GM10248 (cell line): ENCODE measurements at regions of chr5 and their contacts with region 1.

Region 1: GRCh38 chr5:671459-672328 is 21.5 kb downstream of the TPPP start:
- DNase-seq: peak; percentile 83
- CTCF ChIP-seq: peak; percentile 93

Region 2: DNA sequence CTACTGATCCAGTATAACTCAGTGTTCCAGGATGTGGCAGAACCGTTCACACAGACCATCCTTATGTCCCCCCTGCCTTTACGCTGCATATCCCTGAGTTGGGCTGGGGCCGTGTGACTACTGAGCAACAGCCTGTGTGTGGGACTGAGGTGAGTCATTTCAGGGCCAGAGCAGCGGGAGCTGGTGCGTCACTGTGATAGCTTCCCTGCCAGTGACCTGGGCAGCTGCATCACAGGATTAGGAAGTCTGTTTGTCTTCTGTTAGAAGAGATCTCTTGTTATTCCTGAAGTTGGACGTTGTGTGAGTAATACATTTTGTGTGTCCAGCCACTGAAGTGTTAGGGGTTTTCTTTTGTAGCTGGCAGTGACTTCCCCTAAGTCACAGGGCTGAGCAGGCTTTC is 14.1 kb before region 1 on chr5:
- CTCF ChIA-PET with region 1: interaction called, 15 read pairs
- POLR2A ChIA-PET with region 1: no interaction called
- DNase-seq: no peak
- CTCF ChIP-seq: no peak

Region 3: DNA sequence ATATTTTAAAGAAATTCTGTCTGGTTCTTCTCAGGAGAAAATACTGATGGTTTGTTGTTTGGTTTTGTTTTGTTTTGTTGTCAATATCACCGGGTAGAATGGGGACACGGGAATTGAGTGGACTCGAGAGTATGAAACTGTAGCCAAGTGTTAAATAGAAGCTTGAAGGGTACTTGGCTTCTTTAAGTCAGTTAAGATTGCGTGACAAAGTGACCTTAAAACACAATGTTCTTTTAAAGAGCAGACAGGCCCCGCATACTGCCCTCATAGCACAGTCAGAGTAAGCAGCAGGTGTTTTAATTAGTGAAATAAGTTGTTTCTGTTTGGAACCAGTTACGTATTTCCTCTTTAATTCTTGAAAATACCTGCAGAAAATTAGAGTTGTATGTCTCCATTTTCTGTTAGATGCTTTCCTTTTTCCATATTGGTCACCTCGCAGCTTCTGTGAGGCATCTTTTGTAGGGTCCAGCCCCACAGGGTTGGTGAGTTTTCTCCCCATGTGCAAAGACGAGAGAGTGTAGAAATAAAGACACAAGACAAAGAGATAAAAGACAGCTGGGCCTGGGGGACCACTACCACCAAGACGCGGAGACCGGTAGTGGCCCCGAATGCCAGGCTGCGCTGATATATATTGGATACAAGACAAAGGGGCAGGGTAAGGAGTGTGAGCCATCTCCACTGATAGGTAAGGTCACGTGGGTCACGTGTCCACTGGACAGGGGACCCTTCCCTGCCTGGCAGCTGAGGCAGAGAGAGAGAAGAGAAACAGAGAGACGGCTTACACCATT is 230.6 kb after region 1 on chr5:
- CTCF ChIA-PET with region 1: interaction called, 73 read pairs
- POLR2A ChIA-PET with region 1: no interaction called
- DNase-seq: no peak
- CTCF ChIP-seq: no peak